Activated naive CD4-positive, alpha-beta T cell treated with anti-CD3 and anti-CD28 coated beads for 36 hours (primary cell): ENCODE measurements at regions of chr2 and their contacts with region 1.

Region 1: DNA sequence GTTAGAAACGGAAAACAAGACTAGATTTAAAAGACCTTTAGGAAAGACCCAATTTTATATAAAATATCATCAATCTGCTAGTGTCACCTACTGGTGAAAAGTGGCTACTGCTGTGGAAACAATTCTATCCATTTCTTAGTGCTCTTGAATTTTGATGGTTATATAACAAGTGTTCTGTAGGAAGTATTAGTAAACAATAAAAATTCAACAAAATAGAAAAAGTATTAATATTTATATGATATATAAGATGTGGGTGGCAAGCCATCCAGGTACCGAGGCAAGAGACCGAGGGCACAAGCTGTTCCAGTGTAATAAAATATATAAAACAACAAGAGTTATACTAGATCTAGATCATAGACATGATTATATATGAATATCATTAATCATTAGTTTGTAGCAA is 6.2 kb upstream of the TMEM87B start:
- DNase-seq: peak; percentile 54
- H3K4me3 Mint-ChIP-seq: no peak overlapping the region
- H3K27ac Mint-ChIP-seq: no peak overlapping the region
- H3K4me1 Mint-ChIP-seq: peaks cover 8% of the 10 kb centered on the region
- H3K27me3 Mint-ChIP-seq: no peaks in the 10 kb centered on the region

Region 2: GRCh38 chr2:111239107-111239506 is 809.8 kb before region 1 on chr2:
- CTCF ChIA-PET with region 1: no interaction called
- intact Hi-C with region 1: no loop called
- DNase-seq: no peak
- H3K4me3 Mint-ChIP-seq: no peak overlapping the region
- H3K27ac Mint-ChIP-seq: no peak overlapping the region
- H3K4me1 Mint-ChIP-seq: no peaks in the 10 kb centered on the region
- H3K27me3 Mint-ChIP-seq: peaks cover 1% of the 10 kb centered on the region

Region 3: GRCh38 chr2:111897924-111898702 is 150.8 kb before region 1 on chr2 and contains the start of gene MERTK:
- CTCF ChIA-PET with region 1: interaction called, 4 read pairs
- intact Hi-C with region 1: loop called (anchors 1 kb)
- DNase-seq: peak; percentile 72
- H3K4me3 Mint-ChIP-seq: peak within 1 kb of the TSS; percentile 76
- H3K27ac Mint-ChIP-seq: no peak within 1 kb of the TSS
- H3K4me1 Mint-ChIP-seq: peaks cover 9% of the 10 kb centered on the region
- H3K27me3 Mint-ChIP-seq: peaks cover 18% of the 10 kb centered on the region
- total RNA-seq, gene MERTK: 0.57 to 0.88 TPM